ENCODE measurements at regions of chr16 and their contacts with region 1.

Region 1: GRCh38 chr16:53703590-53704444 is at the starts of genes FTO and RPGRIP1L:
- DNase-seq: peak; percentile 99
- ATAC-seq: peak; percentile 100
- H3K4me3 ChIP-seq: peak within 1 kb of the TSS; percentile 77
- H3K27ac ChIP-seq: peak within 1 kb of the TSS; percentile 66
- H3K4me1 ChIP-seq: no peaks in the 10 kb centered on the region
- H3K27me3 ChIP-seq: no peaks in the 10 kb centered on the region
- total RNA-seq, gene FTO: 75.2 to 86.3 (median 78.9) TPM
- total RNA-seq, gene RPGRIP1L: 1.9 to 3.5 (median 3.3) TPM

Region 2: DNA sequence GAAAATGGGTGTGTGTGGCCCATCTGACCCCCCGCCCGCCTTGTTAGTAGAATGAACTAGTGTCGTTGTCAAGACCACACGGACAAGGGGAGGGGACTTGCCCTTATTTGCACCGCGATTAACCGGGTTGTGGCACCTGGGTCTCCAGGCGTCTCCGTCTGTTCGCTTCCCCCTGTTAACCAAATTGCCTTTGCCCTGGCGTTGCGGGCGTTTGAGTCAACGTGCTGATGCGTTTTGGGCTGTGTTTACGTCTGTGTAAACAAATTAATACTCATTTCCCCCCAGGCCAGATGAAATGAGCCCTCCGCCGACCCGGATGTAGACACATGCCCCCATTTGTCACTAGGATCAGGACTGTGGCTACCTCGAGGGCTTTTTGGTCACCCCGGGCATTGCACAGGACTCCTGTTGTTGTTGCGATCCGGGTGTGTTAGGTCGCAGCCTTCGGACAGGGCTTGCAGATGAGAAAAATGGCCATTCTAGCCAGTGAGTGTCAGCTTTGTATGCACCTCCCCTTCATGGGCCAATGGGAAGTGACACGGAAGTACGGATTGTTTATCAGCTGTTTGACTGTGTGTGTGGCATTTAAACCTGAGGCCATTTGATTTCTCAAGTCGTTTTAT is 268.6 kb before region 1 on chr16:
- intact Hi-C with region 1: loop called in 1 of 4 experiments (anchors 10 kb)
- DNase-seq: peak; percentile 63 to 79 (median 73)
- ATAC-seq: peak; percentile 95
- H3K4me3 ChIP-seq: peak overlapping the region; percentile 80
- H3K27ac ChIP-seq: peak overlapping the region; percentile 62
- H3K4me1 ChIP-seq: no peaks in the 10 kb centered on the region
- H3K27me3 ChIP-seq: no peaks in the 10 kb centered on the region

Measured in right cardiac atrium (tissue), 5 donors.